ENCODE measurements at regions of chr7 and their contacts with region 1.

Region 1: GRCh38 chr7:155598810-155599210 is 45.7 kb upstream of the RBM33 start:
- DNase-seq: peak; percentile 89
- ATAC-seq: peak; percentile 24; the same call in 1 of the 2 replicates
- H3K4me3 Mint-ChIP-seq: no peak overlapping the region
- H3K27ac Mint-ChIP-seq: no peak overlapping the region
- H3K4me1 Mint-ChIP-seq: peaks cover 39% of the 10 kb centered on the region
- H3K27me3 Mint-ChIP-seq: no peaks in the 10 kb centered on the region; the same call in 1 of the 2 replicates
- CTCF ChIP-seq: peak; percentile 94

Region 2: GRCh38 chr7:155584763-155585531 is 13.9 kb before region 1 on chr7:
- CTCF ChIA-PET with region 1: interaction called, 26 read pairs
- POLR2A ChIA-PET with region 1: no interaction called
- DNase-seq: no peak
- ATAC-seq: no peak
- H3K4me3 Mint-ChIP-seq: no peak overlapping the region
- H3K27ac Mint-ChIP-seq: no peak overlapping the region
- H3K4me1 Mint-ChIP-seq: no peaks in the 10 kb centered on the region
- H3K27me3 Mint-ChIP-seq: no peaks in the 10 kb centered on the region
- CTCF ChIP-seq: no peak

Region 3: DNA sequence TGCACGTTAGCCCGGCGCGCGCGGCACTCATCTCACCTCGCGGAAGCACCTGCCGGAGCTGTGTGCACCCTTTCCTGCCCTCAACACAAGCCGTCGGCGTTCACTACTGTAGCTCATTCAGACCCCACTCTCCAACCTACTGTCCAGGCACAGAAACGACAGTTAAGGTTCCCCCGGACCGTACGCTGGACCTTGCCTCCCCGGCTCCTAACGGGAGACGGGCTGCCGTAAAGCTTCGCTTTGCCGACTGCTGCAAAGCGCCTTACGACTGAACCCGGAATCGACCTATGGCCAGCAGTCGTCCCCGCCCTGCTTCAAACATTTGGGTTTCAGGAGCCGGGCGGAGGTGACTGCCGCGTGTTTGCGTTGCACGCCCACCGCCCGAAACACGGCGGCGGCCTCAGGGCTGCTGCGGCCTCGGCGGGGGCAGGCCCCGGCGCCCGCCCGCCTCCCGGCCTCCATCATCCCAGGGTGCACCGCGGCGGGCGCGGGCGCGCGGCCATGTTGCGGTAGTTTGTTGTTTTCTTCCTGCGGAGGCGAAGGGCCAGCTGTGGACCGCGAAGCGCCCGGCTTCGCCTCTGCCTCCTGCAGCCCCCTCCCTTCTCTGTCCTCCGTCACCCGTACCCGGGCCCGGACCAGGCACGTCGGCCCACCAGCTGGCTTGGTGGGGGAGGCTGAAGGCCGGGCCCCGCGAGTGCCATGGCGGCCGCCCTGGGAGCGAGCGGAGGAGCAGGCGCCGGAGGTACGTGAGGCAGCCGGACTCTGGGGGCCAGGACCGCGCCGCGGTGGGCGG is 45.6 kb after region 1 on chr7 and contains the start of gene RBM33:
- CTCF ChIA-PET with region 1: interaction called, 15 read pairs
- POLR2A ChIA-PET with region 1: interaction called, 3 read pairs
- DNase-seq: peak; percentile 71
- ATAC-seq: peak; percentile 65
- H3K4me3 Mint-ChIP-seq: peak within 1 kb of the TSS; percentile 93
- H3K27ac Mint-ChIP-seq: peak within 1 kb of the TSS; percentile 99
- H3K4me1 Mint-ChIP-seq: peaks cover 23% of the 10 kb centered on the region
- H3K27me3 Mint-ChIP-seq: peaks cover 6% of the 10 kb centered on the region
- CTCF ChIP-seq: no peak
- total RNA-seq, gene RBM33: 77.1 to 81.8 TPM (median 77.9 TPM) in 3 replicates

Region 4: GRCh38 chr7:155692317-155692716 is 93.5 kb after region 1 on chr7:
- CTCF ChIA-PET with region 1: interaction called, 22 read pairs
- POLR2A ChIA-PET with region 1: no interaction called
- DNase-seq: no peak
- ATAC-seq: peak; percentile 74
- H3K4me3 Mint-ChIP-seq: no peak overlapping the region
- H3K27ac Mint-ChIP-seq: no peak overlapping the region
- H3K4me1 Mint-ChIP-seq: peaks cover 48% of the 10 kb centered on the region
- H3K27me3 Mint-ChIP-seq: no peaks in the 10 kb centered on the region
- CTCF ChIP-seq: no peak

Region 5: GRCh38 chr7:155769701-155770100 is 170.9 kb after region 1 on chr7:
- CTCF ChIA-PET with region 1: interaction called, 26 read pairs
- POLR2A ChIA-PET with region 1: interaction called, 3 read pairs
- DNase-seq: no peak
- ATAC-seq: no peak
- H3K4me3 Mint-ChIP-seq: no peak overlapping the region
- H3K27ac Mint-ChIP-seq: peak overlapping the region; percentile 46; the same call in 1 of the 2 replicates
- H3K4me1 Mint-ChIP-seq: no peaks in the 10 kb centered on the region
- H3K27me3 Mint-ChIP-seq: no peaks in the 10 kb centered on the region
- CTCF ChIP-seq: no peak

Region 6: GRCh38 chr7:156014201-156014600 is 415.4 kb after region 1 on chr7:
- CTCF ChIA-PET with region 1: no interaction called
- POLR2A ChIA-PET with region 1: no interaction called
- DNase-seq: no peak
- ATAC-seq: no peak
- H3K4me3 Mint-ChIP-seq: no peak overlapping the region
- H3K27ac Mint-ChIP-seq: no peak overlapping the region
- H3K4me1 Mint-ChIP-seq: no peaks in the 10 kb centered on the region
- H3K27me3 Mint-ChIP-seq: no peaks in the 10 kb centered on the region
- CTCF ChIP-seq: no peak